ENCODE measurements at regions of chr19 and their contacts with region 1.

Region 1: DNA sequence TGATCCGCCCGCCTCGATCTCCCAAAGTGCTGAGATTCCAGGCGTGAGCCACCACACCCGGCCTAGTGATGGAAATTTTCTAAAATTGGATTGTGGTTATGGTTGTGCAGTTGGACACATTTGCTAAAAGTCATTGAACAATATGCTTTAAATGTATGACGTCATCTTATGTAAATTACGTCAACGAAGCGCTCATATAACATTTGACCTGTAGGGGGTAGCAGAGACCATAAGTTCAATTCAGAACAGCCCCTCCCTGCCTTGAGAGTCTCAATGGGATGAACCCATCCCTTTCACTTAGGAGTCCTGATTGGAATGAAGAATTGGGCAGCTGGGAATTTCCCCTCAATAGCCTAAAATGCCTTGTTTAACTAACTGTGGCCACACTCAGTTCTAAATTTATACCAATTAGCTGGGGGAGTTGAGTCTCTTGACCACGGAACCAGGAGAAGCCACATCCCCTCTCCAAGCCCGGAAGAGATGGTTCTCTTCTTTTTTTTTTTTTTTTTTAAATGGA is 15.3 kb upstream of the TLE6 start:
- DNase-seq: no peak
- ATAC-seq: peak; percentile 84
- H3K4me3 Mint-ChIP-seq: peak overlapping the region; percentile 46
- H3K27ac Mint-ChIP-seq: no peak overlapping the region
- H3K4me1 Mint-ChIP-seq: peaks cover 18% of the 10 kb centered on the region
- H3K27me3 Mint-ChIP-seq: no peaks in the 10 kb centered on the region
- CTCF ChIP-seq: peak; percentile 20

Region 2: DNA sequence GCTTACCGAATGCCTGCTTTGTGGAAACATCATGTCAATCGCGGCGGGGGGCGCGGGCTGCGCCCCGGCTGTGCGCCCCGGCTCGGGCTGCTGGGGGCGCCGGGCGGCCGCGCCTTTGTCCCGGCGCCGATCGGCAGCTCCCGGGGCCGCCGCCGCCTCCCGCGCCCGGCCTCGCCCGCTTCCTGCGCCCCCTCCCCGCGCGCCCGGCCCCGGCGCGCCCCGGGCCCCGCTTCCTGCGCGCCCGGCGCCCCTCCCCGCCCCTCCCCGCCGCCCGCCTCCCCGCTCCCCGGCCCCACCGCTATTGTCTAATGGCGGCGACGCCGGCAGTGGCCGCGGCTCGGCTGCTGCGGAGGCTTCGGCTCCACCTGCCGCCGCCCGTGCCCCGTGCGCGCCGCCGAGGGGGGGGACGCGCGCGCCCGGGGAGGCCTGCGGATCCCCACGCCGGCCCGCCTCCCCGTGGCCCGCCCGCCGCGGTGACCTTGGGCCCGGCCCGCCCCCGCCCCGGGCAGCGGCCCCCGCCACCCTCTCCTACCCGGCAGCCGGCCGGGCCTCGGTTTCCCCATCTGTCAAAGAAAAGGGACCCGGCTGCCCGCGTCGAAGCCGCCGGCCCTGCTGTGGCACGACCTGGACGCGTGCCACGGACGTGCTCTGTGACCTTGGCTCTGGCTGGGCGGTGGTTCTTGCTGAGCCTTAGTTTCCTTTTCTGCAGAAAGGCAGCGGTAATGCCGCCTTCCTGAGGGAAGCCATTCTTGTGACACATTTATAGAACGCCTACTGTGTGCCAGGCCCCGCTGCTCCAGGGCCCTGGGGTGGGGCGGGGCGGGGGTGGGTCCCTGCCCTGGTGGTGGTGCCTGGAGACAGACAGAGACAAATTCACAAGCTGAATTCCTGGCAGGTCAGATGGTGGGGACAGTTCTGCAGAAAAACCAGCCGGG is 100.3 kb after region 1 on chr19 and contains the start of gene TLE5:
- CTCF ChIA-PET with region 1: no interaction called
- POLR2A ChIA-PET with region 1: interaction called, 6 read pairs
- intact Hi-C with region 1: loop called (anchors 2 kb)
- DNase-seq: peak; percentile 76
- ATAC-seq: peak; percentile 43
- H3K4me3 Mint-ChIP-seq: peak within 1 kb of the TSS; percentile 84
- H3K27ac Mint-ChIP-seq: peak within 1 kb of the TSS; percentile 89
- H3K4me1 Mint-ChIP-seq: peaks cover 65% of the 10 kb centered on the region
- H3K27me3 Mint-ChIP-seq: no peaks in the 10 kb centered on the region
- CTCF ChIP-seq: no peak
- total RNA-seq, gene TLE5: 323 TPM in 2 replicates

Region 3: DNA sequence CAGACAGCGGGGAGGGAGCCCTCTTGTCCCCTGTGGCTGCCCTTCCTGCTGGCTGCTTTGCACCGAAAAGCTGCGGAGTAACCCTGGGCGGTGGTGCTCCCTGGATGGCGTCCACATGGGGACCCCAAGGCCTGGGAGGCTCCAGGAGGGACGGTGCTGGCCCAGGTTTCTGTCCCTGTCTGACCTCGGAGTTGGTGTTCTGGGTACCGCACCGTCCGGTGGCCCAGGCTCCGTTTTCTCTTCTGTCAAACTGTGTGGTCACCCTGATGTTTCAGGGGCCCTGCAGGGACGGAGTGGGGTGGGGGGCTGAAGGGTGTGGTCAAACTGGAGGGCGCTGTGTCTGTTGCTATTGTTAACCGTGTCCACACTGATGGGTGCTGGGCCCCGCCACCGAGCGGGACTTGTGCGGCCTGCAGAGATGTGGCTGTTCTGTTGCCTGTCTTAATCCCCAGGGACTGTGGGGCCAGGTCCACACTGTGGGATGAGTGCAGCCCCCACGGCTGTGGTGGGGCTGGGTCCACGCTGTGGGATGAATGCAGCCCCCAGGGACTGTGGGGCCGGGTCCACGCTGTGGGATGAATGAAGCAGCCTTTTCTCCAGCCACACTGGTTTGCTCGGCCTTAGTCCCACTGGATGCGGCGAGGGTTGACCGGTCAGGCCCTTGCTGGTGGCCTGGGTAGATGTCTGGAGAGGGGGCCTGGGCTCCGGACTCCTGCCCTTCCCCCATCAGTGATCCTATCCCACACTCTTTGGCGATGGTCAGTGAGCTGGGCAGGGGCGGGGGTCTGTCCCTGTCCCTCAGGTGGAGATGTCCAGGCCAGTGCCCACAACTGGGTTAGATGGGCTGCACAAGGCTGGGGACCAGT is 139.0 kb after region 1 on chr19:
- CTCF ChIA-PET with region 1: interaction called, 32 read pairs
- POLR2A ChIA-PET with region 1: interaction called, 8 read pairs
- intact Hi-C with region 1: loop called (anchors 1 kb)
- DNase-seq: no peak
- ATAC-seq: no peak
- H3K4me3 Mint-ChIP-seq: no peak overlapping the region
- H3K27ac Mint-ChIP-seq: no peak overlapping the region
- H3K4me1 Mint-ChIP-seq: peaks cover 29% of the 10 kb centered on the region
- H3K27me3 Mint-ChIP-seq: no peaks in the 10 kb centered on the region
- CTCF ChIP-seq: no peak

Region 4: GRCh38 chr19:3163230-3163886 is 201.3 kb after region 1 on chr19:
- CTCF ChIA-PET with region 1: interaction called, 10 read pairs
- POLR2A ChIA-PET with region 1: interaction called, 4 read pairs
- intact Hi-C with region 1: loop called (anchors 1 kb)
- DNase-seq: peak; percentile 56
- ATAC-seq: peak; percentile 96
- H3K4me3 Mint-ChIP-seq: peak overlapping the region; percentile 12
- H3K27ac Mint-ChIP-seq: no peak overlapping the region
- H3K4me1 Mint-ChIP-seq: peaks cover 24% of the 10 kb centered on the region
- H3K27me3 Mint-ChIP-seq: no peaks in the 10 kb centered on the region
- CTCF ChIP-seq: peak; percentile 85

Region 5: GRCh38 chr19:3250675-3251074 is 288.6 kb after region 1 on chr19:
- CTCF ChIA-PET with region 1: no interaction called
- POLR2A ChIA-PET with region 1: no interaction called
- intact Hi-C with region 1: loop called (anchors 1 kb)
- DNase-seq: no peak
- ATAC-seq: peak; percentile 60
- H3K4me3 Mint-ChIP-seq: no peak overlapping the region
- H3K27ac Mint-ChIP-seq: no peak overlapping the region
- H3K4me1 Mint-ChIP-seq: no peaks in the 10 kb centered on the region
- H3K27me3 Mint-ChIP-seq: peaks cover 22% of the 10 kb centered on the region
- CTCF ChIP-seq: no peak

Measured in activated B cell treated with CpG ODN at 0.5 μM for 24 hours (primary cell).